OCI-LY7 (cell line): ENCODE measurements at regions of chr9 and their contacts with region 1.

Region 1: DNA sequence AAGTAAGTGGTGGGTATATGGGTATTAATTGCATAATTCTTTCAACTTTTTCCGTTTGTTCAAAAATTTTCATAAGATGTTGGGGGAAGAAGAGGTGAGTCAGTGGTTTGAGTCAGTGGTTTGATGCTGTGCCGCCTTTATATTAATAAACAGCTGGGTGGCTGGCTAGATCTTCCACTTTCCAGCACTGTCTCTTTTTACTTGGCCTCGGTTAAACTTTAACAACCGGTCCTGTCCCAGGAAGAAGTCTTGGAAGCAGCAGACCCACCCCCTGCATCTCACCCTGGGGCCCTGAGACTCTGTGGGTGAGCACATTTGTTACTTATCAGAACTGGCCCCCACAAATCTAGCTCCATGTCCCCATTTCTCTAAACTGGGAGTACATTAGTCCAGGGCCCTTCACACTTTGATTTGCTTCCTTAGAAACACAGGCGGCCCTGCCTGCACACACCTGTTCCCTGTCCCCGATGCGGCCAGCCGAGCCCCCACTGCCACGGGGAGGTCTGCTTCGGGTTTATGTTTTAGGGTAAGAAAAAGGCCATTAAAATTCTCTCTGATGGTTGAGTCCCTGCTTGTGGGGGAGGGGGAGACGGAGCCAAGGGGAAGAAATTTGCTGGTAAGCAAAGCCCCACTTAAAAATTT is 90.7 kb downstream of the PTCH1 start:
- DNase-seq: peak; percentile 47
- H3K4me3 ChIP-seq: peak overlapping the region; percentile 71
- H3K27ac ChIP-seq: peak overlapping the region; percentile 60
- H3K4me1 ChIP-seq: peaks cover 14% of the 10 kb centered on the region
- CTCF ChIP-seq: no peak

Region 2: DNA sequence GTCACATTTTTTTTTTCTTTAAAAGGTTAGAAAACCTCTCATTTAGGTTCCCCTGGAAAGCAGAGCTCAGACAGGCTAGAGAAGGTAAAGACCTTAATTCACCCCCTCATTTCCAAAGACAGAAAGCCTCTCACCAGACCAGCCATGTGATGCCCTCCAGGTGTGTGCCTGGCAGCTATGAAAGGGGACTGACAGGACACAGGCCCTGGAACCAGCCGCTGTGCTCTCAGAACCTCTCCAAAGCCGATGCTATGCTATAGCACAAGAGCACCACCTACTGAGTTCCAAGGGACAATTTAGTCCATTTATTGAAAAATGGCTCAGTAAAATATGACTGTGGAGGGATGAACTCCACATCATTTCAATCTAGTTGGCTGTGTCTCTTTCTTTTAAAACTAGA is 157.3 kb before region 1 on chr9:
- CTCF ChIA-PET with region 1: no interaction called
- POLR2A ChIA-PET with region 1: no interaction called
- intact Hi-C with region 1: no loop called
- DNase-seq: peak; percentile 24
- H3K4me3 ChIP-seq: no peak overlapping the region
- H3K27ac ChIP-seq: no peak overlapping the region
- H3K4me1 ChIP-seq: peaks cover 37% of the 10 kb centered on the region
- CTCF ChIP-seq: peak; percentile 64

Region 3: DNA sequence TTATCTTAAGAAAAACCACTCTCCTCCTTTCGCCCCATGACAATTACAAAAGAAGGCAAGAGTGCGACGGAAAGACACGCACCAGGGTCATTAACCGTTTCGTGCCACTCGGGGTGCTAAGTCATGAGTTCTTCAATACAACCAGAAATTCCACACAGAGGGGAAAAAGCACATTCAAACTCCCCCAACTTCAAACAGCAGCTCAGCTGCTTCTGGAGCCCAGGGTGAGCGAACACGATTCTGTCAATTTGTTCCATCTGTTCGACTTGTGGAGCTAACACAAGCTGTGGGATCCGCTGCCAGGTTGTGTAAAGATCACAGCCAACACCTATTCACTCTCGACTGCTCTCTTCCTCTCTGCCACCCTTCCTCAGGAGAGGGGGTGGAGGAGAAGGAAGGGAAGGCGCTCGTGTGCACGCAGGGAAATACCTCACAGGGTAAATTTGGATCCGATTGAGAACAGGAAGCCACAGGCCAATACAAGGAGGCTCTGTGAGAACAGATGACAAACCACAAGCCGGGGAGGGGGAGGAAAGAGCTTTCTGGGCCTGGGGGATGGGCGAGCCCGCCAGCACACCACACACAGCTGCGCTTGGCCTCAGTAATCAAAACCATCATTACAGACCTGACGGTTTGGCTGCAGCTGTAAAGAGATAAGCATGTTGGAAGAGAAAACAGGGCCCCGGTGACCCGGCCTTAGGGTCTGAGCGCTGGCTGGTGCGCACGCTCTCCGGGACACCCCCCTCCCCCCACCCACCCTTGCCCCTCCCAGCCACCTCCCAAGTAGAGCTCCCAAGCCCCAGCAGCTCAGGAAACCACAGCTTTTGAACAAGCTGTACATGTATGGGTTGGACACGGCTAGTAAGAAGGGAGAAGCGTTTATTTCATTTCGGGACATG is 36.5 kb after region 1 on chr9:
- CTCF ChIA-PET with region 1: no interaction called
- POLR2A ChIA-PET with region 1: interaction called, 3 read pairs
- intact Hi-C with region 1: loop called (anchors 2 kb)
- DNase-seq: peak; percentile 97
- H3K4me3 ChIP-seq: peak overlapping the region; percentile 65
- H3K27ac ChIP-seq: peak overlapping the region; percentile 100
- H3K4me1 ChIP-seq: peaks cover 48% of the 10 kb centered on the region
- CTCF ChIP-seq: no peak